ENCODE measurements at regions of chr12 and their contacts with region 1.

Region 1: DNA sequence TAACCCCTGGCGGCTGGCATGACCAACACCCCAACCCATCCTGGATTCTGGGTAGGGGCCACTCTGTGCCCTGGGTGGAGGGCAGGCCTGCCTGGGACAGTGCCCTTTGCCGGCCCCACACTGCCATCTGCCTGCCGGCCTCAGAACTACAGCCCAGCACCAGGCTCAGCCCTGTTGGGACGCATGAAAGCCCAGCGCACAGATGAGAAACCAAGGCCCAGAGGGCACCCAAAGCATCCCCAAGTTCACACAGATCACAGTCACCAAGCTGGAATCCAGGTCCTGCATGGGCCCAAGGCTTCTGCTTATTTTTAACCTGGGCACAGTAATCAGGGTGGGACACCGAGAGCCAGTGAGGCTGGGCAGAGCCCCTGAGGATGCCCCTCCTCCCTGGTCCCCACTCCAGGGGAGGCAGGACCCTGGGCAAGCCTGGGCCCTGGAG is 26.2 kb downstream of the RFLNA start:
- DNase-seq: peak; percentile 49
- H3K4me3 ChIP-seq: no peak overlapping the region
- H3K27ac ChIP-seq: no peak overlapping the region
- H3K4me1 ChIP-seq: no peaks in the 10 kb centered on the region
- H3K27me3 ChIP-seq: no peaks in the 10 kb centered on the region
- CTCF ChIP-seq: peak; percentile 92 to 97 (median 94)
- POLR2A ChIP-seq: no peak

Region 2: GRCh38 chr12:124053851-124054250 is 267.2 kb before region 1 on chr12:
- intact Hi-C with region 1: loop called (anchors 5 kb)
- DNase-seq: peak; percentile 33
- H3K4me3 ChIP-seq: no peak overlapping the region
- H3K27ac ChIP-seq: no peak overlapping the region
- H3K4me1 ChIP-seq: no peaks in the 10 kb centered on the region
- H3K27me3 ChIP-seq: no peaks in the 10 kb centered on the region
- CTCF ChIP-seq: peak in 3 of 4 experiments; percentile 53 to 77 (median 62)
- POLR2A ChIP-seq: no peak

Region 3: DNA sequence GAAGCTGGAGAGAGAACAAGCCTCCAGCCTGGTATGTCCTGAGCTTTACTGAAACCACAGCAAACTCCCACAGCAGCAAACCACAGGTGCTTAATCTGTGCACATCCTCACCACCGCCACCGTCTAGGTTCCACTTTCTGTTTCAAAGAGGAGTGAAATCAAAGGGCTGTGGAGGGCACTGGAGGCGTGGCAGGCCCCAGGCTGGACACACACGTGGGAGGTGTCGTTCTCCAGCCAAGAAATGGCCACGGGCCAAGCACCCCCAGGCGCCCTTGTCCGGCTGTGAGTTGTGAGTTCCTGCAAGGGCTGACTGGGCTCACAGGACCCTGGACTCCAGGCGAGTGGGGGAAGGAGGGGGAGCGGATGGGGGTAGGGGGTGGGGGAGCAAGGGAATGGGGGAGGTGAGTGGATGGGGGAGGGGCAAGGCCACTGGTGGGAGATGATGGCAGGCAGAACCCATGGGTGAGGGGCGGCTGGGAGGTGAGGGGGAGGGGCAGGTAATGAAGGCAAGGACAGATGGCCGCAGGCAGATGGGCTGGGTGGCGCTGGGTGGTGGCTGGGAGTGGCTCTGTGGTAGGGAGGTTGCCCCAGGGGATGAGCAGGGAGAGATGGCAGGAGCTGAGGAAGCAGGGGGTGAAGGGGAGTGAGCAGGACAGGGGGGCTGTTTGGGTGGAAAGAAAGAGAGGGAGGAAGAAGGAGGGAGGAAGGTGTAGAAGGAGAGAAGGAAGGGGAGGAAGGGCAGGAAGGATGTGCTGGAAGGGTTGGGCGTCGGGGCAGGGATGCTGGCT is 159.6 kb after region 1 on chr12:
- intact Hi-C with region 1: no loop called
- DNase-seq: no peak
- H3K4me3 ChIP-seq: no peak overlapping the region
- H3K27ac ChIP-seq: no peak overlapping the region
- H3K4me1 ChIP-seq: peaks cover 4% of the 10 kb centered on the region
- H3K27me3 ChIP-seq: no peaks in the 10 kb centered on the region
- CTCF ChIP-seq: no peak
- POLR2A ChIP-seq: no peak